Dorsolateral prefrontal cortex (tissue), 120 donors: ENCODE measurements at regions of chr3 and their contacts with region 1.

Region 1: DNA sequence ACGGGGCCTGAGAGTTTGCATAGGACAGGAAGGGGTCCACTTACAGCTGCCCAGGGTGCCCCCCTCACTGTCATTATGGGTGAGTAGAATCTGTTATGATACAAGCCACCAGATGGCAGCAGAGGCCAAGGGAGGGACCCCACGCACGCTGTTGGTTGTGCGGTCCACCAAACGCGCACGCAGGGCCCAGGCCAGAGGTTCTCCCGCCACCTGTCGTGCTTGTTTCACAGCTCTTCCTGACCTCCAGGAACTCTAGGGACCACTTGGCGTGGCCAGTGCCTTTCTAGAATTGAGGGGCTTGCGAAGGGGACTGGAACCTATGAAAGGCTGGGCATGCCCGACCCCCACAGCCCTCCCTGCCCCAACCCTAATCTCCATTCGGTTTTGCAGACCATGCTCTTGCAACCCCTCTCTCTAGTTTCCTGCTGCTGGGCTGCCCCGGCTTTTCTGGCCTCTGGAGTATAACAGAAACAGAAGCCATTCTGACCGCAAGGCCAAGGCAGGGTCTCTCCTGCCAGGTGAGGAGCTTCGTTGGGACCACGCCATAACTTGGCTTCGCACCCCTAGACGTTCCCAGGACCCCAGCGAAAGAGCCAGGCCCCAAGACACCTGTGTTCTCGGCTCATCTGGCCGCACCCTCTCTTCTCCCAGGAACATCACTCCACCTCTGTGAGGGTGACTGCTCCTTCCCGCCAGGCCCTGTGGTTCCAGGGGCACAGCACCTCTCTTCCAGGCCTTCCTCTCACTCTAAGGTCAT is 46.0 kb downstream of the ALDH1L1 start:
- DNase-seq: peak; percentile 51 to 80 (median 65)
- H3K4me3 ChIP-seq: peak overlapping the region in 1 of 59 donors; percentile 31
- H3K27ac ChIP-seq: no peak overlapping the region
- H3K27me3 ChIP-seq: peaks cover 0 to 7% (median 0%) of the 10 kb centered on the region in 45 donors
- CTCF ChIP-seq: peak; percentile 60 to 90 (median 81)

Region 2: GRCh38 chr3:126031981-126032471 is 102.4 kb before region 1 on chr3:
- intact Hi-C with region 1: no loop called
- DNase-seq: peak in 1 of 10 donors; percentile 3
- H3K4me3 ChIP-seq: no peak overlapping the region
- H3K27ac ChIP-seq: no peak overlapping the region
- H3K27me3 ChIP-seq: no peaks in the 10 kb centered on the region
- CTCF ChIP-seq: no peak

Region 3: DNA sequence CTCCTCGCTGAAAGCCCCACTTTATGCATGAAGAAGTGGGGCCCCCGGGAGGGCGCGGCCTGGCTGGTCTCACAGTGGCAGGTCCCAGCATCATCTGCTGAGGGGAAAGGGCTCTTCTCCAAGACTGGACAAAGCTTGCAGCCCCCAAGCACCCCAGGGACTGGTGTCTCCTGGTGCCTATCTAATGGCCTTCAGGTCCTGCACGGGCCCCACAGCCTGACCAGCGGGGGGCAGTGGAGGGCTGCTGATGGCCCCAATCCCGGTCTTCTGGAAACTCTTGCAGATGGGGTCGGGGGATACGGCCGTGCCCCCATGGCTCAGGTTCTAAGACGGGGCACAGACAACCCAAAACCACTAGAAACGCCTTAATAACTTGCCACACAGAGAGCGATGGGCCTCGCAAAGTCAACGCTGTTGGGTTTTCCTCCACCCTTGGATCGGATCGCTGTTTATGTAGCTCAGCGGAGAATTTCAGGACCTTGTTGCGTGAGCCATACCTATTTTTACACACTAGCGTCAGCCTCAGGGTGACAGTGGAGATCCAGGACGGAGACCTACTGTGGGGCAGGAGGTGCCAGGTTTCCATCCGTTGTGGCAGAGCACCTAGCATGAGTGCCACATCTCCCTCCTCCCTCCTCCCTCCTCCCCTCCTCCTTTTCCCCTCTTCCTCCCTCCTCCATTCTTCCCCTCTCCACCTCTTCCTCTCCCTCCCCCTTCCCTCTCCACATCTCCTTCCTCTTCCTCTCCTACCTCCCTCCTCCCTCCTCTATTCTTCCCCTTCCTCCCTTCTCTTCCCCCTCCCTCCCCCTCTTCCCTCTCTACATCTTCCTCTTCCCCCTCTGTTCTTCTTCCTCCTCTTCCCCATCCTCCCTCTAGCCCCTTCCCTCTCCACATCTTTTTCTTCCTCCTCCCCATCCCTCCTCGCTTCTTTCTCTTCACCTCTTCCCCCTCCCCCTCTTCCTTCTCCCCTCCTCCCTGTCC is 125.3 kb after region 1 on chr3:
- intact Hi-C with region 1: loop called in 1 of 2 experiments (anchors 5 kb)
- DNase-seq: peak; percentile 18 to 84 (median 70)
- H3K4me3 ChIP-seq: peak overlapping the region in 5 of 59 donors; percentile 1 to 31 (median 21)
- H3K27ac ChIP-seq: peak overlapping the region in 3 of 59 donors; percentile 0 to 44 (median 15)
- H3K27me3 ChIP-seq: no peaks in the 10 kb centered on the region
- CTCF ChIP-seq: peak; percentile 43 to 96 (median 82)

Region 4: GRCh38 chr3:126357295-126358037 is 223.1 kb after region 1 on chr3 and contains the start of gene KLF15:
- intact Hi-C with region 1: no loop called
- DNase-seq: peak; percentile 82 to 96 (median 90)
- H3K4me3 ChIP-seq: peak within 1 kb of the TSS; percentile 61 to 95 (median 82)
- H3K27ac ChIP-seq: peak within 1 kb of the TSS; percentile 90 to 100 (median 98)
- H3K27me3 ChIP-seq: no peaks in the 10 kb centered on the region
- CTCF ChIP-seq: peak in 1 of 56 donors; percentile 14
- total RNA-seq, gene KLF15: 11.7 to 112 (median 39.5) TPM

Region 5: DNA sequence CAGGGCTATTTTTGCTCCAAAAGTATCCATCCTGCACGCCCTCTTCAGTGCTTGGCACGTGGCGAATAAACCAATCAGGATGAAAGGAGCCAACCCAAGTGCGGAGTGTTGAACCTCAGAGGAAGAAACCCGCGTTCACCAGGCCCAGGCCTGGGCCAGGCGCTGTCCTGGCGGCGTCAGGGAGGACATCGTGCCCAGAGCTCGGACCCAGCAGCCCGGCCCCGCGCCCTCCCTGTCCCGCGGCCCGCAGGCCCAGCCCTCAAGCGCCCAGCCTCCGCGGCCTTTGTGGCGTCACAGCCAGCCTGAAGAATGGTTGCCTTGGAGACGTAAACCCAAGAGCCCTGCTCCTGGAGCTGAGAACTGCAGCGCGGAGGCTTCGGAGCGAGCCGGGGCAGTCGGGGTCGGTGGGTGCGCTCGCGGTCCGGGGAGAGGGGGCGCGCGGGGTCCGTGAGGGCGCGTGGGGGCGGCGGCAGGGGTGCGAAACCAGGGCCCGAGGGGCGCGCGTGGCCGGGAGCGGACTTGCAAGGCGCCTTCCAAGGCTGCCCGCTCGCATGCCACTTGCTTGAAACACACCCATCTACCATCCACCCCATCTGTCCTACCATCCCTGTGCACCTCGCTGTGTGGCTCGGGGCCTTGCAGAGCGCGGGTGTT is 260.3 kb after region 1 on chr3 and contains the start of gene CFAP100:
- intact Hi-C with region 1: loop called (anchors 5 kb)
- DNase-seq: peak in 6 of 10 donors; percentile 11 to 67 (median 56)
- H3K4me3 ChIP-seq: peak within 1 kb of the TSS; percentile 14 to 61 (median 45)
- H3K27ac ChIP-seq: peak within 1 kb of the TSS in 2 of 59 donors; percentile 33 to 53
- H3K27me3 ChIP-seq: no peaks in the 10 kb centered on the region
- CTCF ChIP-seq: no peak
- total RNA-seq, gene CFAP100: 0.29 to 7.9 (median 2.4) TPM in 113 of 120 experiments, not detected in the others

Region 6: GRCh38 chr3:126883241-126883640 is 748.8 kb after region 1 on chr3:
- intact Hi-C with region 1: no loop called
- DNase-seq: no peak
- H3K4me3 ChIP-seq: no peak overlapping the region
- H3K27ac ChIP-seq: no peak overlapping the region
- H3K27me3 ChIP-seq: no peaks in the 10 kb centered on the region
- CTCF ChIP-seq: no peak